ENCODE measurements at regions of chr7 and their contacts with region 1.

Region 1: GRCh38 chr7:74633451-74633921 is 24.0 kb upstream of the GTF2I start:
- DNase-seq: no peak
- ATAC-seq: no peak
- H3K4me3 ChIP-seq: no peak overlapping the region
- H3K4me3 Mint-ChIP-seq: no peak overlapping the region
- H3K27ac ChIP-seq: no peak overlapping the region
- H3K27ac Mint-ChIP-seq: no peak overlapping the region
- H3K4me1 ChIP-seq: no peaks in the 10 kb centered on the region
- H3K4me1 Mint-ChIP-seq: no peaks in the 10 kb centered on the region
- H3K27me3 ChIP-seq: no peaks in the 10 kb centered on the region
- H3K27me3 Mint-ChIP-seq: no peaks in the 10 kb centered on the region
- CTCF ChIP-seq: no peak

Region 2: DNA sequence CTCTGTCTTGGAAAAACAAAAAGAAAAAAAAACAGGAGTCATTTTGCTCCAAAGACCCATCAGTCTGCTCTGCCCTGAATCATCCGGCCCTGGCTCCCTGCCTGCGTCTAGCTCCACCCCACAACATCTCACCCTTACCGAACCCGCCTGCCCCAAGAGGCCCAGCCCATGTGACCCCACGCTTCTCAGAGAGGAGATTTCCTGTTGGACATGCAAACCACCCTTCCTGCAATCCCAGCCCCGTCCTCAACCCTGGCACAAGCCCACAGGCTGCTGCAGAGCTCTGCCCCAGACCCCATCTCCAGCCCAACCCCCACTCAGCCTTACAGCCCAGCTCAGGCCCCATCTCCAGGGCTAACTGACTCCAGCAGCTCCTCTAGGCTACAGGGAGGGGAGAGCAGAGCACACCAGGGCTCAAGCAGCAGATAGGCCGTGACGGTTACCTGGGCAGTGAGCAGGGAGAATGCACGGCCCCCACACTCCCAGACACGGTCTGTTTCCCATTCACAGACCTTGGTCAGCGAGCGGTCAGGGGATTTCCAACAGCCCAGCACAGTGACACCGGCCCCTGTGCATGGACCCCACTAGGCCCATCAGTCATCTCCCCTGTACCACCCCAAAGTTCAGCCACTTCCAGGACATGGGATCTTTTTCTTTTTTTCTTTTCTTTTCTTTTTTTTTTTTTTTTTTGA is 45.9 kb before region 1 on chr7:
- CTCF ChIA-PET with region 1: no interaction called
- POLR2A ChIA-PET with region 1: no interaction called
- intact Hi-C with region 1: no loop called
- DNase-seq: no peak
- ATAC-seq: no peak
- H3K4me3 ChIP-seq: no peak overlapping the region
- H3K4me3 Mint-ChIP-seq: no peak overlapping the region
- H3K27ac ChIP-seq: no peak overlapping the region
- H3K27ac Mint-ChIP-seq: no peak overlapping the region
- H3K4me1 ChIP-seq: no peaks in the 10 kb centered on the region
- H3K4me1 Mint-ChIP-seq: no peaks in the 10 kb centered on the region
- H3K27me3 ChIP-seq: no peaks in the 10 kb centered on the region
- H3K27me3 Mint-ChIP-seq: no peaks in the 10 kb centered on the region
- CTCF ChIP-seq: no peak

Region 3: DNA sequence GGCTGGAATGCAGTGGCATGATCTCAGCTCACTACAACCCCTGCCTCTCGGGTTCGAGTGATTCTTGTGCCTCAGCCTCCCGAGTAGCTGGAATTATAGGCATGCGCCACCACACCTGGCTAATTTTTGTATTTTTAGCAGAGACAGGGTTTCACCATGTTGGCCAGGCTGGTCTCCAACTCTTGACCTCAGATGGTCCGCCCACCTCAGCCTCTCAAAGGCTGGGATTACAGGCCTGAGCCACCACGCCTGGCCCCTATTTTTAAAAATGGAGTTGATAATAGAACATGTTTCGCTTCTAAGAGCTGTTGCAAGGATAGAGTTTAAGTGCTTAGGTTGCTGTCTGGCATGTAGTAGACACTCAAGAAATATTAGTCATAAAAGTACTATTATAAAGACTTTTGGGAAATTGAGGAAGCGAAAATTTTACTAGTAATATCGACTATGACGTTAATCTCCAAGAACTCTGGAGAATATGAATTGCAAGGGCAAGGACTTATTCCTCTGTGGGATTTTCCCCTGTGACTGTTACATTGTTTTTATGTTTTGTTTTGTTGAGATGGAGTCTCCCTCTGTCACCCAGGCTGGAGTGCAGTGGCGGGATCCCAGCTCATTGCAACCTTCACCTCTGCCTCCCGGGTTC is 31.9 kb after region 1 on chr7:
- CTCF ChIA-PET with region 1: no interaction called
- POLR2A ChIA-PET with region 1: no interaction called
- intact Hi-C with region 1: no loop called
- DNase-seq: no peak
- ATAC-seq: no peak
- H3K4me3 ChIP-seq: no peak overlapping the region
- H3K4me3 Mint-ChIP-seq: no peak overlapping the region
- H3K27ac ChIP-seq: no peak overlapping the region
- H3K27ac Mint-ChIP-seq: no peak overlapping the region
- H3K4me1 ChIP-seq: peaks cover 20% of the 10 kb centered on the region
- H3K4me1 Mint-ChIP-seq: peaks cover 61% of the 10 kb centered on the region
- H3K27me3 ChIP-seq: no peaks in the 10 kb centered on the region
- H3K27me3 Mint-ChIP-seq: no peaks in the 10 kb centered on the region
- CTCF ChIP-seq: no peak

Region 4: DNA sequence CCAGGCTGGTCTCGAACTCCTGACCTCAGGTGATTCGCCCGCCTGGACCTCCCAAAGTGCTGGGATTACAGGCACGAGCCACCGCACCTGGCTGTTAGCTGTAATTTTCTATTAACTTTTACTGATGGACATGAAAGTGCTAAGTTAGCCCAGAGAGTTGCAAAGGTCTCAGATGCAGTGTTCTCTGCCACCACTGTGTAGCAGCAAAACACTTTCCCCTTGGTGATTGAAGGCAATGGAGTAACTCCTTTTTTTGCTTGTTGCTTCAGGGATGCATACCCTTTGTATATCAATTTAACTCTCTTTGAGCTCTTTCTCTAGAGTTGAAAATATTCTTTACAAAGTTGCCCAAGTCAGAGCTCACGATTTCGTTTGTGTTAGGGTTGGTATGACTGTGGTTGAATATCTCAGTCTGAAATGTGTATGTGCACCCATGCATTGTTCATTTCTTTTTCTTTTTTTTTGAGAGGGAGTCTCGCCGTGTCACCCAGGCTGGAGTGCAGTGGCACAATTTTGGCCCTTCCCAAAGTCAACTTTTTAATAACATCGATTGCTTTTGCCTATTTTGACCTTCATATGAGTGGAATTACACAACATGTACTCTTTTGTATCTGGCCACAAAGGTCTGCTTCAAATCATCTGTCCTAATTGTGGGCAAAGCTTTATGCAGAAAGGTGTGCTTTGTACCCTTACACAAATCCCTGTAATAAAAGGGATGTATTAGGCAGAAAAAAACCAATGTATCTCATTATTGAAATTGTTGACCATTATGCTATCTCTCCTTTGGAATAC is 76.6 kb after region 1 on chr7:
- CTCF ChIA-PET with region 1: no interaction called
- POLR2A ChIA-PET with region 1: no interaction called
- intact Hi-C with region 1: loop called in 1 of 2 experiments (anchors 5 kb)
- DNase-seq: peak in 1 of 9 experiments; percentile 14
- ATAC-seq: no peak
- H3K4me3 ChIP-seq: no peak overlapping the region
- H3K4me3 Mint-ChIP-seq: no peak overlapping the region
- H3K27ac ChIP-seq: no peak overlapping the region
- H3K27ac Mint-ChIP-seq: no peak overlapping the region
- H3K4me1 ChIP-seq: no peaks in the 10 kb centered on the region
- H3K4me1 Mint-ChIP-seq: no peaks in the 10 kb centered on the region
- H3K27me3 ChIP-seq: no peaks in the 10 kb centered on the region
- H3K27me3 Mint-ChIP-seq: no peaks in the 10 kb centered on the region
- CTCF ChIP-seq: no peak

Region 5: GRCh38 chr7:76008156-76008687 is 1374.7 kb after region 1 on chr7:
- CTCF ChIA-PET with region 1: no interaction called
- POLR2A ChIA-PET with region 1: no interaction called
- intact Hi-C with region 1: no loop called
- DNase-seq: peak in 3 of 9 experiments; percentile 17 to 62 (median 40)
- ATAC-seq: peak; percentile 34
- H3K4me3 ChIP-seq: no peak overlapping the region
- H3K4me3 Mint-ChIP-seq: peak overlapping the region; percentile 29
- H3K27ac ChIP-seq: no peak overlapping the region
- H3K27ac Mint-ChIP-seq: peak overlapping the region; percentile 4
- H3K4me1 ChIP-seq: peaks cover 26% of the 10 kb centered on the region
- H3K4me1 Mint-ChIP-seq: peaks cover 25% of the 10 kb centered on the region
- H3K27me3 ChIP-seq: no peaks in the 10 kb centered on the region
- H3K27me3 Mint-ChIP-seq: no peaks in the 10 kb centered on the region
- CTCF ChIP-seq: no peak

Measured in CD8-positive, alpha-beta T cell (primary cell).